IMR-90 (cell line): ENCODE measurements at regions of chr2 and their contacts with region 1.

Region 1: DNA sequence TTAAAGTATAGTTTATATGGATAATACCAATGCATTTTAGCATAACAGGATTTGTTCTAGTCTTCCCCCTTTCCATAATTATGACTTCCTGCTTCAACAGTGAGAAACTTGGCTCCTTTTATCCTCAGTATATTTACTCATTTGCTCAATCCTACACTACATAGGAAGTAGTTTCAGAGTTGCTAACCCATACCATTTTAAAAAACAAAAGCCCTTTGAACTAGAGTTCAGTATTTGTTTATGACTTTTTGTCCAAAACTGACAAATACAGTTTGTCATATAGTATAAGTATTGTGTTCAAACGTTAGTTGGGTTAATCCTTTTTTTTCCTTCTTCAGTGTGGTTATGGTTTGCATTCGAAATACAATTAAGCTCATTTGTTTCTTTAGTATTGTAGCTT is 5.9 kb upstream of the DNAJC27 start:
- DNase-seq: no peak
- ATAC-seq: no peak
- H3K4me3 ChIP-seq: no peak overlapping the region
- H3K27ac ChIP-seq: no peak overlapping the region
- H3K4me1 ChIP-seq: no peaks in the 10 kb centered on the region
- H3K27me3 ChIP-seq: no peaks in the 10 kb centered on the region
- CTCF ChIP-seq: no peak
- POLR2A ChIP-seq: no peak
- RAD21 ChIP-seq: no peak

Region 2: GRCh38 chr2:25190536-25190935 is 212.9 kb after region 1 on chr2:
- CTCF ChIA-PET with region 1: interaction called, 16 read pairs
- POLR2A ChIA-PET with region 1: no interaction called
- dilution Hi-C with region 1: no loop called
- in situ Hi-C with region 1: loop called (anchors 5 kb)
- intact Hi-C with region 1: no loop called
- DNase-seq: no peak
- ATAC-seq: no peak
- H3K4me3 ChIP-seq: no peak overlapping the region
- H3K27ac ChIP-seq: no peak overlapping the region
- H3K4me1 ChIP-seq: peaks cover 2% of the 10 kb centered on the region; the same call in 1 of the 2 replicates
- H3K27me3 ChIP-seq: peaks cover 10% of the 10 kb centered on the region
- CTCF ChIP-seq: no peak
- POLR2A ChIP-seq: no peak
- RAD21 ChIP-seq: no peak